Activated naive CD4-positive, alpha-beta T cell treated with anti-CD3 and anti-CD28 coated beads for 36 hours (primary cell): ENCODE measurements at regions of chr7 and their contacts with region 1.

Region 1: GRCh38 chr7:134126966-134127848 is at the start of gene LRGUK:
- DNase-seq: peak; percentile 86
- H3K4me3 Mint-ChIP-seq: peak within 1 kb of the TSS; percentile 84
- H3K27ac Mint-ChIP-seq: peak within 1 kb of the TSS; percentile 16
- H3K4me1 Mint-ChIP-seq: peaks cover 12% of the 10 kb centered on the region
- H3K27me3 Mint-ChIP-seq: peaks cover 15% of the 10 kb centered on the region
- total RNA-seq, gene LRGUK: 0.07 to 0.14 TPM

Region 2: GRCh38 chr7:133252858-133253518 is 874.2 kb before region 1 on chr7 and contains the start of gene EXOC4:
- CTCF ChIA-PET with region 1: no interaction called
- intact Hi-C with region 1: loop called (anchors 1 kb)
- DNase-seq: peak; percentile 96
- H3K4me3 Mint-ChIP-seq: peak within 1 kb of the TSS; percentile 88
- H3K27ac Mint-ChIP-seq: peak within 1 kb of the TSS; percentile 82
- H3K4me1 Mint-ChIP-seq: peaks cover 29% of the 10 kb centered on the region
- H3K27me3 Mint-ChIP-seq: no peaks in the 10 kb centered on the region
- total RNA-seq, gene EXOC4: 57.1 to 62.1 TPM

Region 3: DNA sequence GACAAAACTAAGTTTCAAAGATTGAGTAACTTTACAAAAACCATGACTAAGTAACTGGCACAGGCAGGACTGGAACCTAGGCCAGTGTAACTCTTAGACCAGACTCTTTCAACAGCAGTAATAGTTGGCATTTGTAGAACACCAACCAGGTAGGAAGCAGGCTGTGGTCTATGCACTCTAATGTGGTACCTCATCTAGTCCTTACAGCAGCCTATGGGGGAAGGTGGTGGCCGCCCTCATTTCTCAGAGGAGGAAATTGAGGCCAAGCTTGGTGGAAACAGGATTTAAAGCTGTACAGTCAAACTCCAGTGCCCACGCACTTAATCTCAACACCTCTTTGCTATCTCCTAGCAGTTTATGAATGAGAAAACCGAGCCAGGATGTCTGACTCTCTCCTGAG is 165.5 kb before region 1 on chr7:
- CTCF ChIA-PET with region 1: no interaction called
- intact Hi-C with region 1: no loop called
- DNase-seq: no peak
- H3K4me3 Mint-ChIP-seq: no peak overlapping the region
- H3K27ac Mint-ChIP-seq: no peak overlapping the region
- H3K4me1 Mint-ChIP-seq: no peaks in the 10 kb centered on the region
- H3K27me3 Mint-ChIP-seq: no peaks in the 10 kb centered on the region

Region 4: GRCh38 chr7:134140889-134141867 is 14.0 kb after region 1 on chr7:
- CTCF ChIA-PET with region 1: interaction called, 13 read pairs
- intact Hi-C with region 1: no loop called
- DNase-seq: peak; percentile 72
- H3K4me3 Mint-ChIP-seq: peak overlapping the region; percentile 4
- H3K27ac Mint-ChIP-seq: no peak overlapping the region
- H3K4me1 Mint-ChIP-seq: peaks cover 5% of the 10 kb centered on the region
- H3K27me3 Mint-ChIP-seq: no peaks in the 10 kb centered on the region